Heart left ventricle (tissue), 16 donors: ENCODE measurements at regions of chr2 and their contacts with region 1.

Region 1: DNA sequence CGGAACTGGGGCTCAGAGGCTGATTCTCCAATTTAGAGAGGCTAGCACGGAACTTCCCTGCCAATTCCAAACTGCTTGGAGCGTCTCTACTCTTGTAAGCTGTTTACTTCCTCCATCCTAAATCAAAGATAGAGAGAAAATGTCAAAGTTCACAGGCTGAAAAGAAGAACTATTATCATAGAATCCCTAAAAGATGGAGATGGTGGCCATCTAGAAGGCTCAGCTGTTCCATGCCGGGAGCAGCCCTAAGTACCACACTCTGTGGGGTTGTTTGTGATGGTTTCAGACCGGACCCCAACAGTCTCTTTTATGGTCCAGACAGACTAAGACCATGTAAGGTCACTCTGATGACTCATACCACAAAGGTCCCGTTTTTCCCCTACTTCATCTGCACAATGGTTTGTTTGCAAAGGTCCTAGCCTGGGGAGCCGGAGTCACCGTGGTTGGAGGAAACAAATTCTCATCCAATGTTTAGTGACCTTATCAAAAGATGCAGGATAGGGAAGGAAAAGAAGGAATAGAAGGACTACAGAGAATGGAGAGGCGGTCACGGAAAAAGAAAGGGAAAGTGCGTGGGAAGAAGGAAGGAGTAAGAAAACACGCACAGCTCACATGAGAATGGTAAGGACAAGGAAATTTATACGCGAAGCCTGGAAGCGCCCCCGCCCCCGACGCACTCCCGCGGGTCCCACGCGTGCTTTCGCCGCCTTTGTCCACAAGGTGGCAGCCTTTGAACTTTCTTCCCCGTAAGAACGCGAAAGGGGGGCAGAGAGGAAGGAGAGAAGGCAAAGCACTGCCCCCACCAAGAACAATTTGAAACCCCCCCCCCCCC is 453 bp upstream of the ANTXR1 start:
- DNase-seq: peak; percentile 66 to 80 (median 77)
- ATAC-seq: peak; percentile 65 to 78 (median 71)
- H3K4me3 ChIP-seq: peak overlapping the region; percentile 65 to 83 (median 72)
- H3K27ac ChIP-seq: peak overlapping the region in 8 of 12 donors; percentile 55 to 89 (median 77)
- H3K4me1 ChIP-seq: peaks cover 0 to 20% (median 10%) of the 10 kb centered on the region in 12 donors
- H3K27me3 ChIP-seq: peaks cover 0 to 41% (median 14%) of the 10 kb centered on the region in 9 donors
- CTCF ChIP-seq: peak; percentile 51 to 86 (median 75)
- POLR2A ChIP-seq: no peak

Region 2: DNA sequence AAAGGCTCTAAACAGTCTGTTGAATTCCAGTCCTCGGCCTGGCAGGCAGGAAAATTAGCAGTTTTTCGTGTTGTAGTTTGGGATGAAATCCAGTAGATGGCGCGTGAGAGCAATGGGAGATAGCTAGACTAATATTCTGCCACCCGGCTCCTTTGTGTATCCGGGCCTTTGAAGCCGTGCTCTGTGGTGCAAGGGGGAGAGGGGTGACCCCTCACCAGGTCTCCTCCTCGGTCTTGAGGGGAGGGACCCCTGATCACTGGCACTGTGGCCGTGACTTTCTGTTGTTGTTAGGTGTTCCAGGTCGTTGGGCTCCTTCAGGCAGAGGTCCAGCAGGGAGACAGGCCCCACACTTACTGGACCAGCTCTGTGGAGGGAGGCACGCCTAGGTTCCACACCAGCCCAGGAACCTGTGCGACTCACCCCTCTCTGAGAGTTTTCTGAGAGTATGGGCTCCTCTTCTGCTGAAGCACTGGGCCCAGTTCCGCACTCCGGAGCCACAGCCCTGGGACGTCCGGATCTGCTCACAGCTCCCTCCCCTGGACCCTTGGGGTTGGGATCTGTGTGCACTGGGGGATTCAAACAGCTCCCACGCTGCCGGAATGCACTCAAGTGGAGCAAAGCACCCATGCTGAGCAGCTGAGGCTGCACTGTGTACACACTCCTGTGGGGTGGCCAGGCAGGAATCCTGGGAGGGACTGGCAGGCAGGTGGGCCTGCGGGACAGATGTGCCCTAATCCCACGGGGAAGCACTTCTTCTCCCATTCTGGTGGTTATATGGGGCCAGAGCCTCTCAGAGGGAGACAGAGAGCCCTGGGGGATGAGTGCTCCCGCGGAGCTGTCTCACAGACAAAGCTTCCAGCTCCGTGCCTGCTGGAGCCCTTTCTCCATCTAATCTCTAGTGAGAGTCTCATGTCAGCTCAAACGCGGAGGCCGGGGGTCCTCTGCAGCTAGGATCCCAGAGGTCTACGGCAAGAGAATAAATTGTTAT is 68.7 kb before region 1 on chr2:
- intact Hi-C with region 1: loop called in 2 of 10 experiments (anchors 5 kb)
- DNase-seq: peak in 3 of 5 donors; percentile 40 to 52 (median 44)
- ATAC-seq: peak; percentile 58 to 71 (median 70)
- H3K4me3 ChIP-seq: no peak overlapping the region
- H3K27ac ChIP-seq: no peak overlapping the region
- H3K4me1 ChIP-seq: peaks cover 0 to 10% (median 0%) of the 10 kb centered on the region in 12 donors
- H3K27me3 ChIP-seq: peaks cover 0 to 3% (median 0%) of the 10 kb centered on the region in 9 donors
- CTCF ChIP-seq: peak; percentile 74 to 88 (median 80)
- POLR2A ChIP-seq: no peak

Region 3: GRCh38 chr2:69163109-69163508 is 150.6 kb after region 1 on chr2:
- intact Hi-C with region 1: loop called in 1 of 10 experiments (anchors 10 kb)
- DNase-seq: peak in 1 of 5 donors; percentile 35
- ATAC-seq: peak in 3 of 4 donors; percentile 81 to 86 (median 85)
- H3K4me3 ChIP-seq: no peak overlapping the region
- H3K27ac ChIP-seq: peak overlapping the region in 5 of 12 donors; percentile 6 to 63 (median 46)
- H3K4me1 ChIP-seq: peaks cover 0 to 69% (median 41%) of the 10 kb centered on the region in 12 donors
- H3K27me3 ChIP-seq: no peaks in the 10 kb centered on the region
- CTCF ChIP-seq: no peak
- POLR2A ChIP-seq: no peak

Region 4: GRCh38 chr2:69185807-69186206 is 173.3 kb after region 1 on chr2:
- intact Hi-C with region 1: loop called in 1 of 10 experiments (anchors 10 kb)
- DNase-seq: no peak
- ATAC-seq: no peak
- H3K4me3 ChIP-seq: no peak overlapping the region
- H3K27ac ChIP-seq: no peak overlapping the region
- H3K4me1 ChIP-seq: peaks cover 0 to 17% (median 0%) of the 10 kb centered on the region in 12 donors
- H3K27me3 ChIP-seq: no peaks in the 10 kb centered on the region
- CTCF ChIP-seq: no peak
- POLR2A ChIP-seq: no peak